Transverse colon (tissue), 4 donors: ENCODE measurements at regions of chr19 and their contacts with region 1.

Region 1: GRCh38 chr19:10230861-10231611 is at the start of gene S1PR2:
- DNase-seq: peak; percentile 82
- H3K4me3 ChIP-seq: peak within 1 kb of the TSS; percentile 74 to 95 (median 83)
- H3K27ac ChIP-seq: peak within 1 kb of the TSS; percentile 84 to 92 (median 89)
- H3K4me1 ChIP-seq: peaks cover 0 to 22% (median 12%) of the 10 kb centered on the region in 4 donors
- H3K27me3 ChIP-seq: no peaks in the 10 kb centered on the region
- CTCF ChIP-seq: peak in 1 of 5 experiments; percentile 6
- EP300 ChIP-seq: no peak
- POLR2A ChIP-seq: peak; percentile 33
- total RNA-seq, gene S1PR2: 0.80 to 7.1 (median 3.5) TPM

Region 2: GRCh38 chr19:10106100-10106936 is 124.7 kb before region 1 on chr19 and contains the start of gene PPAN:
- in situ Hi-C with region 1: loop called in 2 of 4 experiments (anchors 10 to 25 kb)
- intact Hi-C with region 1: loop called (anchors 10 kb)
- DNase-seq: peak; percentile 99
- H3K4me3 ChIP-seq: peak within 1 kb of the TSS; percentile 51 to 74 (median 68)
- H3K27ac ChIP-seq: peak within 1 kb of the TSS; percentile 67 to 88 (median 80)
- H3K4me1 ChIP-seq: peaks cover 11 to 20% (median 17%) of the 10 kb centered on the region in 4 donors
- H3K27me3 ChIP-seq: no peaks in the 10 kb centered on the region
- CTCF ChIP-seq: no peak
- EP300 ChIP-seq: no peak
- POLR2A ChIP-seq: peak; percentile 66
- total RNA-seq, gene PPAN: 10.1 to 31.8 (median 21.5) TPM

Region 3: DNA sequence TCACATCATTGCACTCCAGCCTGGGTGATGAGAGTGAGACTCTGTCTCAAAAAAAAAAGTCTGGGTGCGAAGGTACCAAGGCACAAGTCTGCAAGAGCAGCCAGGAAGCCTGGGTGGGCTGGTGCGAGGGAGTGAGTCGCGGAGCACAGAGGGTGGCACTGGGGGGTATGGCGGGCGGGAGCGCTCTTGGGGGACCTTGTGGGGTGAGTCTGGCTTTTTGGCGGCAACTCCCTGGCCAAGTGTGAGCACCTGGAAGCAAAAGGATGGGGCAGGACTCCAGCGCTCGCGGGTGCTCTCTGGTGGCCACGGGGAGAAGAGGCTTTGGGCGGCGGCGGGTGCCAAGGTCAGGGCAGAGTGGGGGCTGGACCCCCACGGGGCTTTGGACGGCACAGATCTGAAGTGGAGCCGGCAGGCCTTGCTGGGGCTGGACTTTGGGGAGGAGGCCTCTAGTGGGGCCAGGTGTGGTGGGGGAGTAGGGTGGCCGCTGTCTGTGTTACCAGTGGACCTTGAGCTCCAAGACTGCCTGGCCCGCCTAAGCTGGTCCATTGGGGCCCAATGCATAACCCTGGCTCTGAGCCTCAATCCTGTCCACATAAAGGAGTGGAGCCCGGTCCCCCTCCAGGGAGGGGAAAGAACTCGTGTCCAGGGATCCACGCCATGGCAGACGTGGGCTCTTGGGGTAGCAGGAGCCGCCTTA is 118.0 kb before region 1 on chr19:
- in situ Hi-C with region 1: loop called in 2 of 4 experiments (anchors 10 to 25 kb)
- intact Hi-C with region 1: loop called (anchors 10 kb)
- DNase-seq: peak; percentile 68
- H3K4me3 ChIP-seq: no peak overlapping the region
- H3K27ac ChIP-seq: peak overlapping the region; percentile 5 to 55 (median 48)
- H3K4me1 ChIP-seq: peaks cover 0 to 8% (median 5%) of the 10 kb centered on the region in 4 donors
- H3K27me3 ChIP-seq: no peaks in the 10 kb centered on the region
- CTCF ChIP-seq: peak; percentile 56 to 72 (median 62)
- EP300 ChIP-seq: no peak
- POLR2A ChIP-seq: no peak